Spleen (tissue), 13 donors: ENCODE measurements at regions of chr17 and their contacts with region 1.

Region 1: DNA sequence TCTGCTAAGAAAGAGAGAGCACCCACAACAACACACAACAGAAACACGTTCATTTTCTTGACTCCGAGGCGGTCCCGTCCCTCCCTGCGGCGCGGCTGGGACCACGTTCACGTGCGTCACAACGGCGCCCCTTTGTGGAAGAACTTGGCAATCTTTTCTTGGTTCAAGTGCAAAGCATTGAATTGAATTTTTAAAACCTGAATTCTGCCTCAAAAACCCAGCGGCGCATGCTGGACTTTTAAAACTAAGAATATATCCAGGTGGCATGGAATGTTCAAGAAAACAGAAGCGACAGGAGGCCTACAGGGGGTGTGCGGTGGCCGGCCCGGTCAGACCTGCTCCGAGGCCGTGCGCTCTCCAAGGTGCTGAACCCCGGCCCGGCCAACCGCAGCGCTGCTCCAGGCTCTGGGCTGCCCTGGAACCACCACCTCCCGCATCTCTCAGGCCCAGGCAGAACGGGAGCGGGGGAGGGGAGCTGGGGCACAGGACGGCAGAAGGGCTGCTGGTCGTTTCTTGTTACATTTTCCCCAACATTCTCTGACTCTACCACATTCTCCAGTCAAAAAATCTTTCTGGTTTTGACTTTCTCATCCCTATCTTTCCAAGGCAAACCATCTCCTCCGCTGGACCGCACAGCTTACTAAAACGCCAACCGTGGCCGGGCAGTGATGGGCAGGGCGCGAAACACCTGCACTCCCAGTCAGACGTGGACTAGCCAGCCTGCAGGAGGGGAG is 3.4 kb upstream of the HEXD start:
- DNase-seq: peak; percentile 88
- H3K4me3 ChIP-seq: peak overlapping the region in 1 of 8 donors; percentile 14
- H3K27ac ChIP-seq: no peak overlapping the region
- H3K4me1 ChIP-seq: peaks cover 15 to 51% (median 34%) of the 10 kb centered on the region in 6 donors
- H3K27me3 ChIP-seq: no peaks in the 10 kb centered on the region
- CTCF ChIP-seq: peak; percentile 23 to 80 (median 70)
- POLR2A ChIP-seq: no peak

Region 2: DNA sequence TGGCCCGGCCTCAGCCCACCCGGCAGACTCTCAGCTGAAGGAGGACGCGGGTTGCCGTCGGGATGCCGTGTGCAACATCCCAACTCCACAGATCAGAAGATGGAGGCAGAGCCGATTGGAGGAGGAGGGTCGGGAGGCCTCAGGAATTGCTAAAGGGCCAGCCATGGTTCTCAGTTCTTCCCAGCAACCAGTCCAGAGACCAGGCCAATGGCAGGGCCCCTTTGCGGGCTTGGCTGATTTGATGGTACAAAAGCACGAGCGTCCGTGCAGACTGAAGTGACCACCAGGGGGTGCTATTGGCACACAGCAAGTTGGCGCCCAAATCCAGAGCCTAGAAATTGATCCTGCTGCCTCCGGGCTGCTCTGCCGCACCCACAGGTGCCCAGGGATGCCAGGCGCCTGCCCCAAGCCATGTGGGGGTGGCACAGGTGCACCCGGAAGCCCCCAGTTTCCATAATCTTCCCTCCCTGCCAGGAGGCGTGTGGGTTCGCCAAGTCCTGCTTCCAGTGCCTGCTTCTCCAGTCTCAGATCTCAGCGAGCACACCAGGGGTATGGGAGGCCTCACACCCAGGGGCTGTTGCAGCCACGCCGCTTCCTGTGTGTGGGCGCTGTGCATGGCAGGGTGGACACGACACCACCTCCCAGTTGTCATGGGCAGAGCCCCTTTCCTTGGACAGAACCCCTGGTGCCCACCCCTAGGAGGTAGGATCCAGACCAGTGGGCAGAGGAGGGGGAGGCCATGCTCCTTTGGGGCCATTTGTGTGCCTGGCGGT is 62.8 kb before region 1 on chr17:
- intact Hi-C with region 1: loop called (anchors 2 kb)
- DNase-seq: peak; percentile 93
- H3K4me3 ChIP-seq: no peak overlapping the region
- H3K27ac ChIP-seq: no peak overlapping the region
- H3K4me1 ChIP-seq: peaks cover 3 to 20% (median 6%) of the 10 kb centered on the region in 6 donors
- H3K27me3 ChIP-seq: peaks cover 0 to 76% (median 5%) of the 10 kb centered on the region in 7 donors
- CTCF ChIP-seq: peak; percentile 83 to 97 (median 94)
- POLR2A ChIP-seq: no peak